Esophagus squamous epithelium (tissue), 5 donors: ENCODE measurements at regions of chr12 and their contacts with region 1.

Region 1: GRCh38 chr12:76018111-76018510 is 13.5 kb downstream of the PHLDA1 start:
- DNase-seq: no peak
- H3K4me3 ChIP-seq: no peak overlapping the region
- H3K27ac ChIP-seq: no peak overlapping the region
- H3K4me1 ChIP-seq: peaks cover 3 to 21% (median 11%) of the 10 kb centered on the region in 3 donors
- H3K27me3 ChIP-seq: no peaks in the 10 kb centered on the region
- CTCF ChIP-seq: no peak
- POLR2A ChIP-seq: no peak

Region 2: DNA sequence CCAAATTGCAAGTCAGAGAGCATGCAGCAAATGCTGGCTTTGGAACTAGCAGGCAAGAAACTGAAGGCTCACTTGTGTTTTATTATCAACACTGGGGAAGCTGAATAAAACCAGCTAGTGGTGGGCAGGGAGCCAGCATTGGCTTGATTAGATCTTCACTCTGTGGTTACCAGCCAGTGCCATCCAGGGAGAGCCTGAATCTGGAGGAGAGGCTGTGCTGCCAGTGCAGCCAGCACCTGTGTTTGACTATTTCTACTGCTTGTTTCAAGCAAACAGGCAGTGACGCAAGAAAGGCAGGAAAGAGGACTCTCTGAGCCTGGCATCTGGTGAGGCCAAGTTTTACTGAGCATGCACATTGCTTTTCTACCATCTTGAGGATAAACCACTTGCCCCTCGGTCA is 233.5 kb before region 1 on chr12:
- intact Hi-C with region 1: no loop called
- DNase-seq: no peak
- H3K4me3 ChIP-seq: no peak overlapping the region
- H3K27ac ChIP-seq: no peak overlapping the region
- H3K4me1 ChIP-seq: peaks cover 0 to 17% (median 5%) of the 10 kb centered on the region in 3 donors
- H3K27me3 ChIP-seq: no peaks in the 10 kb centered on the region
- CTCF ChIP-seq: no peak
- POLR2A ChIP-seq: no peak

Region 3: DNA sequence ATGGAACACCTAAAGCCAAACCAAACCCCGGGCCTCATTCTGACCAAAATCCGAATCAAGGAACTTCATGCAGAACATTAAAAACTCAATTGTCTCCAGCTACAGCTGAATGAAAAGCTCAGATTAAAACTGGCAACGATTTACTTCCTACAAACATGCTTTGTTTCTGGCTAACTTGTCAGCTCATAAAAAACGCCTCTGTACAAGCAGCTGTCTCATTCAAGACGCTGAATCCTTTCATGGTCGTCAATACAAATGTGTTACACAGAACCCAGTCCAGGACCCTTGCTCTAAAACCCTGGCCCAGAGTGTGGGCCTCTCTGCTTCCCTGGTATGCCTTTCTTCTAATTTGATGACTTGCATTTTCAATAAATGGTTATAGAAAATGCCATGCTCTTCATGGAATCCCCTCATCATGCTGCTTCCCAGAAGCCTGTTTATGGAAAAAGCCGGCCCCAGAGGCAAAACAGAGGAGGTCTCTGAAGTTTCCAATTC is 169.6 kb before region 1 on chr12:
- intact Hi-C with region 1: loop called (anchors 10 kb)
- DNase-seq: no peak
- H3K4me3 ChIP-seq: no peak overlapping the region
- H3K27ac ChIP-seq: peak overlapping the region; percentile 15 to 76 (median 57)
- H3K4me1 ChIP-seq: peaks cover 20 to 58% (median 40%) of the 10 kb centered on the region in 3 donors
- H3K27me3 ChIP-seq: no peaks in the 10 kb centered on the region
- CTCF ChIP-seq: no peak
- POLR2A ChIP-seq: no peak

Region 4: GRCh38 chr12:76236611-76237010 is 218.5 kb after region 1 on chr12:
- intact Hi-C with region 1: no loop called
- DNase-seq: no peak
- H3K4me3 ChIP-seq: no peak overlapping the region
- H3K27ac ChIP-seq: peak overlapping the region; percentile 9 to 68 (median 59)
- H3K4me1 ChIP-seq: peaks cover 0 to 31% (median 6%) of the 10 kb centered on the region in 3 donors
- H3K27me3 ChIP-seq: no peaks in the 10 kb centered on the region
- CTCF ChIP-seq: no peak
- POLR2A ChIP-seq: no peak